A673 (cell line): ENCODE measurements at regions of chrX and their contacts with region 1.

Region 1: GRCh38 chrX:5278908-5279307 is 949.8 kb downstream of the NLGN4X start:
- DNase-seq: peak; percentile 80
- H3K4me3 ChIP-seq: no peak overlapping the region
- H3K27ac ChIP-seq: peak overlapping the region; percentile 97
- H3K4me1 ChIP-seq: peaks cover 24% of the 10 kb centered on the region
- H3K27me3 ChIP-seq: no peaks in the 10 kb centered on the region
- CTCF ChIP-seq: no peak

Region 2: GRCh38 chrX:4547213-4547836 is 731.6 kb before region 1 on chrX:
- CTCF ChIA-PET with region 1: no interaction called
- POLR2A ChIA-PET with region 1: no interaction called
- intact Hi-C with region 1: loop called (anchors 5 kb)
- DNase-seq: peak; percentile 82
- H3K4me3 ChIP-seq: no peak overlapping the region
- H3K27ac ChIP-seq: no peak overlapping the region
- H3K4me1 ChIP-seq: peaks cover 21% of the 10 kb centered on the region
- H3K27me3 ChIP-seq: no peaks in the 10 kb centered on the region
- CTCF ChIP-seq: peak; percentile 90

Region 3: DNA sequence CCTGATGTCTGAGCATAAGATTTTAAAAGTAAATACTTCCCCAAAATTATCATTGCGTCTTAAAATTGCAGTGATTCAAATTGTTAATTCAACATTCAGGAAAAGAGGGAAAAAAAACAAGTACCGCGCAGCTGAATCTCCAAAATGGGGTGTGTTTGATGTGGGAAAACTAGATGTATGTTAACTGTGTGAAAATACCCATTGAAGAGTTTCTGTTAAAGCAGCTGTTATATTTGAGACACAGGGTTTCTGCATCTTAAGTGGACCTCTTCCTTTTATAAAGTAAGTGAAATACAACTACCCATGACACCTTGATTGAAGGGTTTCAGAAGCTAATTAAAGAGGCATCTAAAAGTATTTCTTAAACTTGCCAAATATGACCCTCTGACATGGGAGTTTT is 236.3 kb before region 1 on chrX:
- CTCF ChIA-PET with region 1: no interaction called
- POLR2A ChIA-PET with region 1: no interaction called
- intact Hi-C with region 1: no loop called
- DNase-seq: no peak
- H3K4me3 ChIP-seq: no peak overlapping the region
- H3K27ac ChIP-seq: no peak overlapping the region
- H3K4me1 ChIP-seq: no peaks in the 10 kb centered on the region
- H3K27me3 ChIP-seq: no peaks in the 10 kb centered on the region
- CTCF ChIP-seq: no peak

Region 4: DNA sequence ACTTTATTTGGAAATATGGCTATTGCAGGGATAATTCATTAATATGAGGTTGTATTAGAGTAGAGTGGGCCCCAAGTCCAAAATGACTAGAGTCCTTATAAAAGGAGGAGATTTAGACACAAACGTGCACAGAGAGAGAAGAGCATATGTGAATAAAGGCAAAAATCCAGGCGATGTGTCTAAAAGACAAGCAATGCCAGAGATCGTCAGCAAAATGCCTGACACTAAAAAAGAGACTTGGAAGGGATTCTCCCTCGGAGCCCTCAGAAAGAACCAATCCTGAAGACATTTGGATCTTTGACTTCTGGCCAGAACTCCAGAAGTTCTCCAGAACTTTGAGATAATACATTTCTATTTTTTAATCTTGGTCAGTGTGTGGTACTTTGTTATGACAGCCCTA is 477.7 kb after region 1 on chrX:
- CTCF ChIA-PET with region 1: no interaction called
- POLR2A ChIA-PET with region 1: no interaction called
- intact Hi-C with region 1: loop called (anchors 1 kb)
- DNase-seq: no peak
- H3K4me3 ChIP-seq: no peak overlapping the region
- H3K27ac ChIP-seq: no peak overlapping the region
- H3K4me1 ChIP-seq: peaks cover 31% of the 10 kb centered on the region
- H3K27me3 ChIP-seq: no peaks in the 10 kb centered on the region
- CTCF ChIP-seq: no peak

Region 5: DNA sequence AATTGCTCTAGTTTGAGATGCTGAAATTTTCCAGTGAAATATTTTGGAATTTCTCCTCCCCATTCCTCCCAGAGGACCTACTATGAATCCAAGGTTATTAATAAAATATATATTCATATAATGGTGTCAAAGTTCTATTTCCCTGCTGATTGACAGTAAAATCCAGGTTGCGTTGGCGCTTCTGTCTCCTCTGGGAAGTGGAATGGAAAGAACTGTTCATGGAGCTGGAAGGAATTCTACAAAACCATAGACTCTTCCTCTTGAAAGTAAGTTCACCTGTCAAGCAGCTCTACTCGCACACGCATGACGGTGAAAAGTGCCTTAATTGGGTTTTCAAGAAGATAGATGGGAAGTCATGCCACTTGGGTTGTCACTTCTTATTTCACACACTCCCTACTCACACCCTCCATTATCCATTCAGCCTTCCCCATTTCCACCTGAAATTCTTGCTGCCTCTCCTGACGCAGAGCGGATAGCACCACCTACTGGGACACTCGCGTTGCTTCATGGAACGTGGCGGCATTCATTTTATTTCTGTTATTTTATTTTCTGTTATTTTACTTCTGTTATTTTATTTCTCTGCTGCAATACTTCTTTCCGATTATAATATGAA is 598.2 kb after region 1 on chrX:
- CTCF ChIA-PET with region 1: no interaction called
- POLR2A ChIA-PET with region 1: no interaction called
- intact Hi-C with region 1: loop called (anchors 2 kb)
- DNase-seq: peak; percentile 82
- H3K4me3 ChIP-seq: no peak overlapping the region
- H3K27ac ChIP-seq: peak overlapping the region; percentile 45
- H3K4me1 ChIP-seq: peaks cover 25% of the 10 kb centered on the region
- H3K27me3 ChIP-seq: no peaks in the 10 kb centered on the region
- CTCF ChIP-seq: peak; percentile 86

Region 6: GRCh38 chrX:6225911-6226595 is 947.1 kb after region 1 on chrX:
- CTCF ChIA-PET with region 1: no interaction called
- POLR2A ChIA-PET with region 1: no interaction called
- intact Hi-C with region 1: loop called (anchors 5 kb)
- DNase-seq: peak; percentile 69
- H3K4me3 ChIP-seq: peak overlapping the region; percentile 95
- H3K27ac ChIP-seq: peak overlapping the region; percentile 88
- H3K4me1 ChIP-seq: peaks cover 14% of the 10 kb centered on the region
- H3K27me3 ChIP-seq: peaks cover 3% of the 10 kb centered on the region
- CTCF ChIP-seq: peak; percentile 50; the same call in 1 of the 2 replicates